WTC11 (cell line): ENCODE measurements at regions of chr1 and their contacts with region 1.

Region 1: DNA sequence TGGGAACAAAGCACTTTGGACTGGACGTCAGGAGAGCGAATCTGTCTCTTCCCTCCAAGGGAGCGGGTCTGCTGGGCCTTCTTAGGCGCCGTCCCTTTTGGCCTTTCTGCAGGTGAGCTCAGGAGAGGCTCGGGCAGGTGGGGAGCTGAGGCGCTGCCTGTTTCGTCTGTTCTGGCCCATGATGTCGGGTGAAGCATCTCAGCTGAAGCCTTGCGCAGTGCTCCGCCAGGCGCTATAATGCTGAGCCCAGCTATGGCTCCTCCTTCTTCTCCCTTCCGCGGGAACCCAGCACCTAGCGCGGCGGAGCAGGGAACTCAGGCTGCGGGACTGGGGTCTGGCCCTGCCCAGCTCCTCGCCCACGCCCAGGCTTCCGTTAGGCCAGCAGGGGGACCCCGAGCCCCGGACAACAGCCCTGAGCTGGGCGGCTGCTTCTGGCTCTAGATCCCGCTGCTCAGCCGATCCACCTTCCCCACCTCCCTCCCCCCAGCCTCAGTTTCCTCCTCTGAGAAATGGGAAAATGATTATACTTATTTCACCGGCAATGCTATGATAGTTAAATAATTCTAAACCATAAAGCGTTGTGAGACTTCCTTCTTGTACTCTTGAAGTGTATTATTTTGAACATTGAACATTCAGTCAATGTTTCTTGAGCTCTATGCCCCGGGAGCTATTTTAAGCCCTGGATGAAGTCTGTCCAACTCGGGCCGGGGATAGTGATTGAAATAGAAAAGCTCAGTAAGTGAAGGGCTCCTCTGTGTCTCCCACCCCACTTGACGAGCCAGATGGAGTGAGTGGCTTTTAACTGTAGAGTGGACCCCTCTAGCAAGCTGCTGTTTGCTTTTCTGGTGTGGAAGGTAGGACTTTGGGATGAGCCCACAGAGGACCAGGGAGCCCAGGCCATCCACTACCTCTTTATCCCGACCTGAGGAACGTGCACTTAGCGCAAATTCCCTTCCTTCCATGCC is 9.6 kb upstream of the ADORA1 start:
- DNase-seq: peak; percentile 95
- ATAC-seq: peak; percentile 100
- H3K4me3 Mint-ChIP-seq: peak overlapping the region; percentile 47
- H3K27ac Mint-ChIP-seq: no peak overlapping the region
- H3K4me1 Mint-ChIP-seq: no peaks in the 10 kb centered on the region; the same call in 1 of the 2 replicates
- H3K27me3 Mint-ChIP-seq: peaks cover 17% of the 10 kb centered on the region
- CTCF ChIP-seq: peak; percentile 66

Region 2: GRCh38 chr1:202861420-202862200 is 256.3 kb before region 1 on chr1:
- CTCF ChIA-PET with region 1: no interaction called
- POLR2A ChIA-PET with region 1: no interaction called
- DNase-seq: peak; percentile 94
- ATAC-seq: peak; percentile 89
- H3K4me3 Mint-ChIP-seq: peak overlapping the region; percentile 88
- H3K27ac Mint-ChIP-seq: peak overlapping the region; percentile 96
- H3K4me1 Mint-ChIP-seq: peaks cover 19% of the 10 kb centered on the region
- H3K27me3 Mint-ChIP-seq: no peaks in the 10 kb centered on the region
- CTCF ChIP-seq: no peak

Region 3: DNA sequence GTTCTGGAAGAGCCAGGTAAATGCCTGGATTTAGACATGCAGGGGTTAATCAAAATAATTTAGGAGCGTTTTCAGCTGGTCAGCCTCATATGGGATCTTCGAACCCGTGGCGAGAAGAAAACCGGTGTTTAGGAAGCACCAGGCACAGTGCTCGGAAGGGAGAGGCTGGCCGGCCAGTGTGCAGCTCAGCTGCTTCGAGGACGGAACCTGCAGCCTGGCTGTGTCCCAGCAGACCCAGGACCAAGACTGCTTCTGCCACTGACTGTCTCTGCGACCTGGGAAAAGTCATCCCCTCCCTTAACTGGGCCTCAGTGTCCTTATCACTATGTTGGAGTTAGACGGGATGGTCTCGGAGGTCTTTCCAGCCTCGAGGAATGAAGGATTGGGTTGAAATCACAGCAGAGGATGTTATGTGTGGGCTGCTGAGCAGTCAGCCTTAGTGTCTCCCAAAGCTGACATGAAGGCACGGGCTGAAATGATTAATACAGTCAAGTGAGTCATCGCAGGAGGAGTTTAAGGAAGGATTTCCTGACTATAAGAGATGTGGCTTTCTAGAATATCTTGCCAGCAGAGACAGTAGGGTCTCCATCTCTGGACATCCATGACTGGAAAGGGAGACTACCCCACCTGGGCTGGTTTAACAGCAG is 70.8 kb before region 1 on chr1:
- CTCF ChIA-PET with region 1: interaction called, 32 read pairs
- POLR2A ChIA-PET with region 1: no interaction called
- DNase-seq: no peak
- ATAC-seq: no peak
- H3K4me3 Mint-ChIP-seq: no peak overlapping the region
- H3K27ac Mint-ChIP-seq: no peak overlapping the region
- H3K4me1 Mint-ChIP-seq: peaks cover 20% of the 10 kb centered on the region
- H3K27me3 Mint-ChIP-seq: no peaks in the 10 kb centered on the region; the same call in 1 of the 2 replicates
- CTCF ChIP-seq: no peak

Region 4: GRCh38 chr1:203099805-203100516 is 17.9 kb before region 1 on chr1:
- CTCF ChIA-PET with region 1: interaction called, 10 read pairs
- POLR2A ChIA-PET with region 1: no interaction called
- DNase-seq: no peak
- ATAC-seq: no peak
- H3K4me3 Mint-ChIP-seq: no peak overlapping the region
- H3K27ac Mint-ChIP-seq: no peak overlapping the region
- H3K4me1 Mint-ChIP-seq: no peaks in the 10 kb centered on the region
- H3K27me3 Mint-ChIP-seq: peaks cover 6% of the 10 kb centered on the region
- CTCF ChIP-seq: no peak

Region 5: DNA sequence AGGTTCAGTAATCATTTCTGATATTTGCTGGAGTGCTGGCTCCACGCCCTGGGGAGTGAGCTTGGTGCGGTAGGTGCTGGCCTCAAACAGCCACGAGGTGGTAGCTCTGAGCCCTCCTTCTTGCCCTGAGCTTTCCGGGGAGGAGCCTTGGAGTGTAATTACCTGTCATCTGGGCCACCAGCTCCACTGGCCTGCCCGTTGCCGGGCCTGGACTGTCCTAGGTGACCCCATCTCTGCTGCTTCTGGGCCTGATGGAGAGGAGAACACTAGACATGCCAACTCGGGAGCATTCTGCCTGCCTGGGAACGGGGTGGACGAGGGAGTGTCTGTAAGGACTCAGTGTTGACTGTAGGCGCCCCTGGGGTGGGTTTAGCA is 48.7 kb after region 1 on chr1:
- CTCF ChIA-PET with region 1: interaction called, 110 read pairs
- POLR2A ChIA-PET with region 1: interaction called, 4 read pairs
- DNase-seq: no peak
- ATAC-seq: peak; percentile 76
- H3K4me3 Mint-ChIP-seq: no peak overlapping the region
- H3K27ac Mint-ChIP-seq: no peak overlapping the region
- H3K4me1 Mint-ChIP-seq: peaks cover 3% of the 10 kb centered on the region; the same call in 1 of the 2 replicates
- H3K27me3 Mint-ChIP-seq: no peaks in the 10 kb centered on the region; the same call in 1 of the 2 replicates
- CTCF ChIP-seq: no peak

Region 6: DNA sequence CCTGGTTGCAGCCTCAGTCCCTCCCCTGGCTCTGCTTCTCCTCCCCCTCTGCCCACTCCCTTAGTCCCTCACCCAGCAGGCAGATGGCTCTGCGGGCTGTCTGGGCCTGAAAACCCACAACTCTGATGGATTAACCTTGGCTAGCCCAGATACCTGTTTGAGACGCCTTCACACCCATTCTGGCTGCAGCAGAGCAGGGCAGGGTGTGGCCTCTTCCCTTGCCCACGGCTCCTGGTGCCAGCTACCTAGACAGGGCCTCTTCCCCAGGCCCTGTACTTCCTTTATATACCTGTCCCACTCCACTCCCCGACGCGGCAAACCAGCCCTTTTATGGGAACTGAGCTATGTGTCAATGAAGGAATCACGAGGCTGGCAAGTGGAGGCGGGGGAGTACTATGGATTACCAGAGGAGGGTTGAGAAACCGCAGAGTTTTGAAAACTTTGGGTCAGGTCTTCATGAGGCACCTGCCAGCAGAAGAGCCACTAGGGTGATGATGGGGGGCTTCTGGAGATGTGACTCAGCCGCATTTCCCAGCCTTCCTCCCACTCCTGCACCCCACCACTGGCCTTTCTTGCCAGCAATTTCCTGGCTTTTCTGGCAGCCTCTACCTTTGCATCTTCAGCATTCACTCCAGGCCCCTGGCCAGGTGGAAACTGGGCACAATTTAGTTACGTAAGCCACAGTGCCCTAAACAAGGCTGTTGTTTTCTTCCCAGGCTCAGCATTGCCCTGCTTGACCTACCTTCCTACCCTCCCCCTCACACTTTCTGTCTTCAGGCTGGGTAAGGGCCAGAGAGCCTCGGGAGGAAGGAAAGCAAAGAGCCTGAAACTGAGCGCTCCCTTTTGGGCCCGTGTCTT is 68.8 kb after region 1 on chr1 and contains the start of gene CHI3L1:
- CTCF ChIA-PET with region 1: interaction called, 13 read pairs
- POLR2A ChIA-PET with region 1: no interaction called
- DNase-seq: no peak
- ATAC-seq: peak; percentile 65
- H3K4me3 Mint-ChIP-seq: peak within 1 kb of the TSS; percentile 32; the same call in 1 of the 2 replicates
- H3K27ac Mint-ChIP-seq: no peak within 1 kb of the TSS
- H3K4me1 Mint-ChIP-seq: peaks cover 32% of the 10 kb centered on the region
- H3K27me3 Mint-ChIP-seq: peaks cover 2% of the 10 kb centered on the region; the same call in 1 of the 2 replicates
- CTCF ChIP-seq: no peak
- total RNA-seq, gene CHI3L1: 0.24 to 0.41 TPM (median 0.27 TPM) in 3 replicates

Region 7: DNA sequence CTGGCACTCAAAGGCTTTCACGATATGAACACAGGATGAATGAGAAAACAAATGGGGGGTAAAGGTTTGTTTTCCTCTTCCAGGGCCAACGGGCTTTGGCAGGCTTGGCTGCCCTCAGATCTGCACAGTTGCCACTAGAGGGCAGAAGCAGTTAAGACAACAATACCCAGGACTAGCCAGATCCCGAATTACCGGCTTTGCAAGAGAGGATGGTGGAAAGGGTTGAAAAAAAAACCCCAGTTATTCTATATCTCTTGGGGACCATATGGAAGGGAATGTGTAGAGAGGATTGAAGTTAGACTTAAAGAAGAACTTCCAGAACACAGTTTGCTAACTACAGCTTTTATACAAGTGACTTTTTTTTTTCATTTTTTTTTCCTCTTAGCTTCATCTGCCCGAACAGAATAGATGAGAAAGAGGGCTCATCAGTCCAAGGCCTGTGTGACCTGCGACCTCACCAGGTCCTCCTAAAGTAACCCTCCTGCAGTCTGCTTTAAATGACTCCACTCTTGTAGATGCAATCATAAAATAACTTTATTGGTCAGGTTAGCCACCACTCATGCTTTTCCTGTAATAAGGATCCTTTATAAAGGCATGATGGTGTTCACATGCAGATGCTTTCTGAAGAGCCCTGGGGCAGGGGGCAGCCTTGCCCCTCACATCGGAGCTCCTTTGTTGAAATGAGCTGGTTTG is 222.4 kb after region 1 on chr1:
- CTCF ChIA-PET with region 1: interaction called, 10 read pairs
- POLR2A ChIA-PET with region 1: no interaction called
- DNase-seq: peak; percentile 75
- ATAC-seq: peak; percentile 73
- H3K4me3 Mint-ChIP-seq: no peak overlapping the region
- H3K27ac Mint-ChIP-seq: no peak overlapping the region
- H3K4me1 Mint-ChIP-seq: peaks cover 31% of the 10 kb centered on the region
- H3K27me3 Mint-ChIP-seq: 0 out of 2 replicates have a peak, but pooled peaks cover 5% of the 10 kb centered on the region
- CTCF ChIP-seq: peak; percentile 75